ENCODE measurements at regions of chr5 and their contacts with region 1.

Region 1: DNA sequence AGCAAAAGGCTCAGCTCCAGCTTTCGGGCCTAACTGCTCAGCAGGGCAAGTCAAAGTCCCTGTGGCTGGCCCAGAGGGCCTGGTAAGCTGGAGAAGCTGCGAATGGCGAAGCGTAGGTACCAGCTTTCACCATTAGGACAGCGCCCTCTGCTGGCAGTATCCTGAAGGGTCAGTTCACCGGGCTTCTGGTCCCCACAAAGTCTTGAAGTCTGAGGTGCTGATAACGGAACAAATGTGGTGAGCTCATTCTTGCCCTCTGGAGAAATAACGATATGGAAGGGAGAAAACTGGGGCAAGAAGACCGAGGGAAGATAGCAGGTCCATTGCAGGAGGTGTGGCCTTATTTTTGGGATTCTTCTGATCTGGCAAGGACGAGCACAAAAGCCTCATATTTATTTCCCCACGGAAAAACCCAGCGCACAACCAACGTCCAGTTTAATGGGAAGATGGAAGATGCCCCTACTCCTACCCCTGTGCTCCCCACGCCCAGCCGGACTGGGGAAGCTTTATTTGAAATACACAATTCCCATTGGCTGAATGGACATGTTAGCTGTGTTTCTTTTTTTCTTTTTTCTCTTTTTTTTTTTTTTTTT is 7.2 kb downstream of the SOWAHA start:
- DNase-seq: peak; percentile 87
- H3K4me3 ChIP-seq: no peak overlapping the region
- H3K27ac ChIP-seq: no peak overlapping the region
- H3K4me1 ChIP-seq: peaks cover 2% of the 10 kb centered on the region
- H3K27me3 ChIP-seq: no peaks in the 10 kb centered on the region
- CTCF ChIP-seq: peak; percentile 78 to 91
- POLR2A ChIP-seq: no peak

Region 2: GRCh38 chr5:132156413-132156812 is 663.8 kb before region 1 on chr5:
- CTCF ChIA-PET with region 1: no interaction called
- POLR2A ChIA-PET with region 1: no interaction called
- dilution Hi-C with region 1: no loop called
- intact Hi-C with region 1: no loop called
- DNase-seq: no peak
- H3K4me3 ChIP-seq: no peak overlapping the region
- H3K27ac ChIP-seq: no peak overlapping the region
- H3K4me1 ChIP-seq: no peaks in the 10 kb centered on the region
- H3K27me3 ChIP-seq: peaks cover 0 to 3% of the 10 kb centered on the region in 2 experiments
- CTCF ChIP-seq: no peak
- POLR2A ChIP-seq: no peak

Region 3: DNA sequence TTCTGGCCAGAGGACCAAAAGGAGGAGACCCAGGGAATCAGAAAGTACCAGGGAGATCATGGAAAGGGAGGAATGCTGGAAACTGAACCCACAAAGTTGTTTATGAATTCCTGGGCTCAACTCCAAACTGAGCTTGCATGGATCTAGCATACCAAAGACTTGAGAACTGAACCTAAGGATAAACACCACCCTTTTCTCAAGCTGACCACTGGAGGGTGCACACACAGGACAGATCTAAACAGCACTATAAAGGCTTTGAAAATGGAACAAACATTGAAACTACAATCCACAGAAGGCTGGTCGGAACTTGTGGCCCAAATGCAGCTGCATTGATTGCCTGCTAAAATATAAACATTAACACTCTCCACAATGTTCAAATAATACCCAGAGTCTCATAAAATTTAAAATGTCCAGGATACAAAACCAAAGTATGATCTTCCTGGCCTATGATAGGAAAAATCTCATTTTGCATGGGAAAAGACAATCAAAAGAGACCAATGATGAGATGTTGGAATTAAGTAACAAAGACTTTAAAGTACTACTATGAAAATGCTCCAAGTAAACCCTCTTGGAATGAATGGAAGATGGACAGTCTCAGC is 314.1 kb before region 1 on chr5:
- CTCF ChIA-PET with region 1: interaction called, 26 read pairs
- POLR2A ChIA-PET with region 1: no interaction called
- dilution Hi-C with region 1: no loop called
- intact Hi-C with region 1: loop called (anchors 5 kb)
- DNase-seq: peak; percentile 67
- H3K4me3 ChIP-seq: no peak overlapping the region
- H3K27ac ChIP-seq: no peak overlapping the region
- H3K4me1 ChIP-seq: peaks cover 35% of the 10 kb centered on the region
- H3K27me3 ChIP-seq: no peaks in the 10 kb centered on the region
- CTCF ChIP-seq: peak; percentile 43 to 68
- POLR2A ChIP-seq: no peak

Region 4: GRCh38 chr5:132736853-132737833 is 83.1 kb before region 1 on chr5 and contains the start of gene KIF3A:
- CTCF ChIA-PET with region 1: interaction called, 16 read pairs
- POLR2A ChIA-PET with region 1: no interaction called
- dilution Hi-C with region 1: no loop called
- intact Hi-C with region 1: no loop called
- DNase-seq: peak; percentile 96
- H3K4me3 ChIP-seq: peak within 1 kb of the TSS; percentile 54 to 79 (median 72)
- H3K27ac ChIP-seq: no peak within 1 kb of the TSS
- H3K4me1 ChIP-seq: peaks cover 11% of the 10 kb centered on the region
- H3K27me3 ChIP-seq: peaks cover 1 to 4% of the 10 kb centered on the region in 2 experiments
- CTCF ChIP-seq: no peak
- POLR2A ChIP-seq: peak; percentile 80
- total RNA-seq, gene KIF3A: 11.2 and 15.8 TPM in 2 replicates

Region 5: DNA sequence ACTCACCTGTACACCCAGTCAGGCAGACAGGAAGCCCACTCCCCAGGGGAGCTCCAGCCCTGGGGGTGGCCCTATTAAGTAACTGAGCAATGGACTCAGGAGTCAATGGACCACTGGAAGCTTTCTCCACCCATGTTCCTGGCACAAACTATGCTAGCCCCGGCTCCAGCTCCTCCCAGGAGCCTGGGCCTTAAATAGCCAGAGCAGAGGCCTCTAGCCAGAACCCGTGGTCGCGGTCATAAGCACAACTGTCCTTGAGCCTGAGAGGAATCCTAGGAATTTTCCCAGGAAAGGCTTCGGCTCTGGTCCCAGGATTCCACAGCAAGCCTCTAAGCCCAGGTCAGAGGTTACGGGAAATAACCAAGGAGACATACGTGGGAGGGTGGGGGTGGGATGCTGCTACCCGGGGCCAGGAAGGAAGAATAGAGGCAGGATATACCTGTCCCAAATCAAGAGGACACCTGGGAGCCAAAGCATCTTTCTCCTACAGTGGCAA is 48.7 kb before region 1 on chr5:
- CTCF ChIA-PET with region 1: interaction called, 19 read pairs
- POLR2A ChIA-PET with region 1: no interaction called
- dilution Hi-C with region 1: no loop called
- intact Hi-C with region 1: loop called (anchors 2 kb)
- DNase-seq: peak; percentile 19
- H3K4me3 ChIP-seq: no peak overlapping the region
- H3K27ac ChIP-seq: peak overlapping the region; percentile 55
- H3K4me1 ChIP-seq: peaks cover 33% of the 10 kb centered on the region
- H3K27me3 ChIP-seq: no peaks in the 10 kb centered on the region
- CTCF ChIP-seq: no peak
- POLR2A ChIP-seq: no peak

Region 6: GRCh38 chr5:132807163-132807838 is 13.0 kb before region 1 on chr5:
- CTCF ChIA-PET with region 1: interaction called, 53 read pairs
- POLR2A ChIA-PET with region 1: no interaction called
- dilution Hi-C with region 1: no loop called
- intact Hi-C with region 1: no loop called
- DNase-seq: no peak
- H3K4me3 ChIP-seq: no peak overlapping the region
- H3K27ac ChIP-seq: no peak overlapping the region
- H3K4me1 ChIP-seq: no peaks in the 10 kb centered on the region
- H3K27me3 ChIP-seq: peaks cover 18 to 25% of the 10 kb centered on the region in 2 experiments
- CTCF ChIP-seq: no peak
- POLR2A ChIP-seq: no peak